ENCODE measurements at regions of chr1 and their contacts with region 1.

Region 1: GRCh38 chr1:85307987-85308832 is 31.8 kb upstream of the BCL10 start:
- DNase-seq: peak; percentile 95
- ATAC-seq: peak; percentile 99
- H3K4me3 Mint-ChIP-seq: peak overlapping the region; percentile 51
- H3K27ac Mint-ChIP-seq: 0 out of 2 replicates have a peak overlapping the region, but pooled peaks have one; percentile 35
- H3K4me1 Mint-ChIP-seq: peaks cover 20% of the 10 kb centered on the region
- H3K27me3 Mint-ChIP-seq: no peaks in the 10 kb centered on the region
- CTCF ChIP-seq: peak; percentile 80

Region 2: DNA sequence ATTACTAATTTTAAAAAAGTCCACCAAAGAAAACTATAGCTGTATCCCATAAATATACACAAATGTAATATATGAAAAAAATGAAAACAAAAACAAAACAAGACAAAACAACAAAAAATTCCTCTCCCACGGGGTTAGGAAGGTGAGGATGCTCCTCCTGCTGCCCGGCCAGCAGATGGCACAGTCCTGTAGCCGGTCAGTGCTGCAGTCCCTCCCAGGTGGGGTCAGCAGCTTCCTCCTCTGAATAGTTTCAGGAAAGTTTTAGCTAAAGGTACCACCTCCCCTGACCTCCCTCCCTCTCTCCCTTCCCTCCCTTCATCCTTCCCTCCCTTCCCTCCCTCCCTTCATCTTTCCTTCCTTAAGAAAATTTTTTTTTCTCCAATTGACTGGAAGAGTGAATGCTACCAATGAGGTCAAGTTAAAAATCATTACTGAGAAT is 36.1 kb after region 1 on chr1:
- CTCF ChIA-PET with region 1: interaction called, 20 read pairs
- POLR2A ChIA-PET with region 1: no interaction called
- DNase-seq: peak; percentile 71
- ATAC-seq: peak; percentile 99
- H3K4me3 Mint-ChIP-seq: no peak overlapping the region
- H3K27ac Mint-ChIP-seq: peak overlapping the region; percentile 92
- H3K4me1 Mint-ChIP-seq: peaks cover 58% of the 10 kb centered on the region
- H3K27me3 Mint-ChIP-seq: no peaks in the 10 kb centered on the region
- CTCF ChIP-seq: 0 out of 2 replicates have a peak, but pooled peaks have one; percentile 27

Region 3: GRCh38 chr1:85463731-85464496 is 155.7 kb after region 1 on chr1:
- CTCF ChIA-PET with region 1: interaction called, 11 read pairs
- POLR2A ChIA-PET with region 1: no interaction called
- DNase-seq: no peak
- ATAC-seq: peak; percentile 2; the same call in 1 of the 2 replicates
- H3K4me3 Mint-ChIP-seq: peak overlapping the region; percentile 64
- H3K27ac Mint-ChIP-seq: no peak overlapping the region
- H3K4me1 Mint-ChIP-seq: peaks cover 31% of the 10 kb centered on the region
- H3K27me3 Mint-ChIP-seq: peaks cover 43% of the 10 kb centered on the region
- CTCF ChIP-seq: no peak

Region 4: DNA sequence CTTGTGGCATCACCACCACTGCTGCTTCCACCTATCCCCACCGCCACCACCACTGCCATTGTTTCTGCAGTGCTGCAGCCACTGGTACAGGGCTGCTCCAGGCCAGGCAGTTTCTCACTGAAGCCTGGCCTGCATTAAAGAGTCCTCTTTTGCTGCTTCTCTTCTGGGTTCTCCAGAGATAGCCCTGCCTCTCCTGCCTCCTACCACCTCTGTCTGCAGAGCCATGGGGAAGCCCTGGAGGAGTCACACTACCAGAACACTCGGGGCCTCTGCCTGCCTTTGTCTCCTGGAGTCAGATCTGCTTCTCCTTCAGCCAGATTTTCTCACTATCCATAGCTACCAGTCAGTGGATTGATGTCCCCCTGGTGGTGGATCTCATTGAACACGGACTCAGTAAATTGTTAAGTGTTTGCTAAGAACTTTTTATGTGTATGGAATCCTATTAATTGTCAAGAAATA is 194.4 kb after region 1 on chr1:
- CTCF ChIA-PET with region 1: interaction called, 19 read pairs
- POLR2A ChIA-PET with region 1: no interaction called
- DNase-seq: peak; percentile 58
- ATAC-seq: peak; percentile 97
- H3K4me3 Mint-ChIP-seq: no peak overlapping the region
- H3K27ac Mint-ChIP-seq: peak overlapping the region; percentile 2; the same call in 1 of the 2 replicates
- H3K4me1 Mint-ChIP-seq: peaks cover 5% of the 10 kb centered on the region
- H3K27me3 Mint-ChIP-seq: peaks cover 7% of the 10 kb centered on the region
- CTCF ChIP-seq: peak; percentile 30; the same call in 1 of the 2 replicates

Region 5: GRCh38 chr1:85580872-85581801 is 272.9 kb after region 1 on chr1:
- CTCF ChIA-PET with region 1: interaction called, 35 read pairs
- POLR2A ChIA-PET with region 1: interaction called, 6 read pairs
- DNase-seq: peak; percentile 85
- ATAC-seq: peak; percentile 31
- H3K4me3 Mint-ChIP-seq: peak overlapping the region; percentile 96
- H3K27ac Mint-ChIP-seq: peak overlapping the region; percentile 100
- H3K4me1 Mint-ChIP-seq: peaks cover 71% of the 10 kb centered on the region
- H3K27me3 Mint-ChIP-seq: peaks cover 33% of the 10 kb centered on the region
- CTCF ChIP-seq: peak; percentile 54

Region 6: GRCh38 chr1:85692730-85693314 is 384.6 kb after region 1 on chr1:
- CTCF ChIA-PET with region 1: interaction called, 31 read pairs
- POLR2A ChIA-PET with region 1: no interaction called
- DNase-seq: no peak
- ATAC-seq: no peak
- H3K4me3 Mint-ChIP-seq: no peak overlapping the region
- H3K27ac Mint-ChIP-seq: peak overlapping the region; percentile 4
- H3K4me1 Mint-ChIP-seq: no peaks in the 10 kb centered on the region
- H3K27me3 Mint-ChIP-seq: no peaks in the 10 kb centered on the region
- CTCF ChIP-seq: no peak

Region 7: DNA sequence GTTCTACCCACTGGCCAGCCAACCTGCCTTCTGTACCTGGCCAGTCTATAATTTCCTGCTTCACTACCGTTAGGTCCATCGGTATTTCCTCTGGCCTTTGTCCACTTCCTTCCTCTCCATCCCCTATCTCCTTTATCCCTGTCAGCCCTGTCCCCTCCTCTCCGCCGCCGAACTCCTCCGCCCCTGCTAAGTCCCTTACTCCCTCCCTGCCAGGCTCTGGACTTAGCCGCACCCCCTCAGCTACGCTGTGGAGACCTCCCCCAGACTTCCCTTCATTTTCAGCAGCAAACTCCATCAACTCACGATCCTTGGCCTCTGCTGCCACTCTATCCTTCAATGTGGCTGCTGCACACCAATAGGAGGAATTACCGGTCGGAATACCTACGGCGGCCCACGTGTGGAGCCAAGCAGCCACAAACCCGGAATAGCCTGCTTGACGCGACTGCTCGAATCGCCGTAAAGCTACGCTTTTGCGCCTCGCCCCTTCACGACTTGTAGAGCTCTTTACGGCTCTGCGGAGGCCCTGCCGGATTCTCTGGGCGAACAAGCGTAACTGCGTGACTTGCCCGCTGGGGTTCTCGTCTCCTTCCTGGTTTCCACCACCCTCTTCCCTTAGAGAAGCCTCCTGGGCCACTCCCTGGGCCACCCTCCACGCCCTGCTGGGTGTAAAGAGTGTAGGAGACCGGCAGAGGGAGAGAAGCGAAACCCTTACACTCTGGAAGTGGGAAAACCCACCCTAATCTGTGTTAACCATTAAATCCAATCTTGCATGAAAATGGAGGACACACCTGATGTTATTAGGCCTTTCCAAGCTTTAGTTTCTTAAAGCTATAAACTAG is 400.0 kb after region 1 on chr1 and contains the start of gene ZNHIT6:
- CTCF ChIA-PET with region 1: interaction called, 10 read pairs
- POLR2A ChIA-PET with region 1: no interaction called
- DNase-seq: peak; percentile 89
- ATAC-seq: peak; percentile 88
- H3K4me3 Mint-ChIP-seq: no peak within 1 kb of the TSS
- H3K27ac Mint-ChIP-seq: no peak within 1 kb of the TSS
- H3K4me1 Mint-ChIP-seq: no peaks in the 10 kb centered on the region
- H3K27me3 Mint-ChIP-seq: no peaks in the 10 kb centered on the region; the same call in 1 of the 2 replicates
- CTCF ChIP-seq: no peak
- total RNA-seq, gene ZNHIT6: 14.3 to 16.4 TPM (median 15.9 TPM) in 3 replicates